Adrenal gland (tissue), 19 donors: ENCODE measurements at regions of chr17 and their contacts with region 1.

Region 1: GRCh38 chr17:72556944-72557826 is 436.4 kb downstream of the SOX9 start:
- DNase-seq: peak; percentile 27 to 76 (median 56)
- H3K4me3 ChIP-seq: no peak overlapping the region
- H3K27ac ChIP-seq: no peak overlapping the region
- H3K4me1 ChIP-seq: no peaks in the 10 kb centered on the region
- H3K27me3 ChIP-seq: no peaks in the 10 kb centered on the region
- CTCF ChIP-seq: peak; percentile 43 to 69 (median 56)
- POLR2A ChIP-seq: no peak

Region 2: GRCh38 chr17:73189417-73190099 is 632.4 kb after region 1 on chr17:
- intact Hi-C with region 1: loop called in 1 of 2 experiments (anchors 10 kb)
- DNase-seq: peak in 6 of 7 donors; percentile 49 to 85 (median 61)
- H3K4me3 ChIP-seq: no peak overlapping the region
- H3K27ac ChIP-seq: no peak overlapping the region
- H3K4me1 ChIP-seq: peaks cover 12% of the 10 kb centered on the region in 2 donors
- H3K27me3 ChIP-seq: no peaks in the 10 kb centered on the region
- CTCF ChIP-seq: peak; percentile 16 to 72 (median 53)
- POLR2A ChIP-seq: no peak

Region 3: DNA sequence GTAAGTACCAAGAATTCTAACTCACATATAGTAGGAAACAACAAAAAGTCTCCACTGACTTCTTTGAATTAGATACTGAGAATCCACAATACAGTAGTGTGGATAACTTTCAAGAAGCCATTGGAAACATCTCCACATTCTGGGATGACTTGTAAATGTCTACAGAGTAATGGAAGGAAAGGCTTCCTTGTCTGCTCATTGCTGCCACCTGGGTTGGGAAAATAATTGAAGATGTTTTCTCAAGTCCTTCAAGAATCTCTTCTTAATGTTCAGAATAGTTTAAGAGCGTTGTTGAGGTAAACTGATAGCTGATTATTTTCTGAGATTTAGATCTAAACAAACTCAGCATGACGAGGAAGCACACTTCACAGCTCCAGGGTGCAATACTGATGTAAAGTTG is 690.5 kb after region 1 on chr17:
- intact Hi-C with region 1: loop called in 1 of 2 experiments (anchors 10 kb)
- DNase-seq: no peak
- H3K4me3 ChIP-seq: no peak overlapping the region
- H3K27ac ChIP-seq: no peak overlapping the region
- H3K4me1 ChIP-seq: no peaks in the 10 kb centered on the region
- H3K27me3 ChIP-seq: no peaks in the 10 kb centered on the region
- CTCF ChIP-seq: peak in 1 of 6 experiments; percentile 28
- POLR2A ChIP-seq: no peak